AG04450 (cell line): ENCODE measurements at regions of chr4 and their contacts with region 1.

Region 1: DNA sequence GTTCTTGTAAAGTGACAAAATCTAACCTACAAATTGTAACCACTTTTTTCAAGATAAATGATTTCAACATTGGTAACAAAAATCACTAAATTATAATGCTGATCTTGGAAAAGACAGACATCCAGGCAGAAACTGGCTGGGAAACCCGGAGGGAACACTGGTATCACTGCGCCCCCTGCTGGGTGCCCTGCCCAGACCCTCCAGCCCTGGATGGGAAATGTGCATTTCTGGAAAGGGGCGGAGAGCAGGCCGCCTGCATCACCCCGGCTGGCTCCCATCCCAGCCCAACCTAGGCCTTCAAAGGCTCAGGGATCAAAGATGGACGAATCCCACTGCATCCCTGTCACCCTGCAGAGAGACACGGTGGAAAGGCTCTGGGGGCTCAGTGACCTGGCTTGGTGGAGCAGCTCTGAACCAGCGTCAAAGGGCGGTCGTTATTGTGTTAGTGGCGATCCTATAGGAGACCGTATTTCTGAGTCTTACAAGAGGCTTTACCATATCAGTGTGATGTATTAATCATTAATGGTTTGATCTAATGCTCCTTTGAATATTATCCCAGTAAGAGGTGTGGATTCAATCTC is 37.3 kb downstream of the ACOX3 start:
- DNase-seq: peak; percentile 66
- H3K4me3 ChIP-seq: no peak overlapping the region
- H3K27ac ChIP-seq: no peak overlapping the region
- H3K27me3 ChIP-seq: no peaks in the 10 kb centered on the region
- CTCF ChIP-seq: peak; percentile 93

Region 2: GRCh38 chr4:8247047-8247930 is 156.0 kb before region 1 on chr4:
- CTCF ChIA-PET with region 1: interaction called, 73 read pairs
- POLR2A ChIA-PET with region 1: interaction called, 5 read pairs
- DNase-seq: no peak
- H3K4me3 ChIP-seq: no peak overlapping the region
- H3K27ac ChIP-seq: no peak overlapping the region
- H3K27me3 ChIP-seq: peaks cover 7% of the 10 kb centered on the region
- CTCF ChIP-seq: no peak

Region 3: GRCh38 chr4:8267077-8267476 is 136.2 kb before region 1 on chr4:
- CTCF ChIA-PET with region 1: interaction called, 26 read pairs
- POLR2A ChIA-PET with region 1: interaction called, 5 read pairs
- DNase-seq: no peak
- H3K4me3 ChIP-seq: no peak overlapping the region
- H3K27ac ChIP-seq: no peak overlapping the region
- H3K27me3 ChIP-seq: peaks cover 2% of the 10 kb centered on the region
- CTCF ChIP-seq: peak; percentile 78

Region 4: DNA sequence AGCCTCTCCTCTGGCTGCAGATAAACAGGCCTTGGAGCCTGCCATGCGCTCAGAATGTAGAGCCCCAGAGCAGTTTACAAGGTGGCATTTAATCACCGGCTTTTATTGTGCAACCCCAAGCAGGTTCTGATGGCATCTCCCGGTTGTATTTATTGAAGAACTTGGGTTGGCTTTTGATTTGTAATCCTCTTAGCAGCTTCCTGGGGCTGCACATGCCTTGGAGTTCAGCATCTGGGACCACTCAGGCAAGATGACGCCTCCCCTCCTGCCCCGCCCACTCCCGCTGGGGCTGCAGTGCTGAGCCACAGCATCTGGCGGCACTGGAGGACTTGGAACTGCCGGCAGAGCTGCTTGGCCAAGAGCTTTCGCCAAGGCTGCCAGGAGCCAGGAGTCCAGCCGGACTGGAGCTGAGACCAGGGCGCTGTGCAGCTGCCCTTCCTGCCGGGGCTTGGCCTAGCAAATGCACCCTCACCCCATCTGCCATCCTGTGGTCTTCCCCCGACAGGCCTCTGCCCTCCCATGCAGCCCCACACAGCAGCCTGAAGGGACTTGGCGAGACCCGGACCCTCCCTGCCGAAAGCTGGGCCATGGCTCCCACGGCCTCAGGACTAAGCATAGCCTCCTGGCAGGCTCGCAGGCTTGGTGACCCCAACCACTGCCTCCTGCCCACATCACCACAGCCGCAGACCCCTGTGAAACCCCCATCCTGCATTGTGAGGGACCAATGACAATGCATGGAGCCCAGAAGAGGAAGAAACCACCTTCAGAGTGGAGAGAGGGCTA is 128.3 kb before region 1 on chr4:
- CTCF ChIA-PET with region 1: interaction called, 11 read pairs
- POLR2A ChIA-PET with region 1: interaction called, 5 read pairs
- DNase-seq: peak; percentile 95
- H3K4me3 ChIP-seq: no peak overlapping the region
- H3K27ac ChIP-seq: peak overlapping the region; percentile 57
- H3K27me3 ChIP-seq: peaks cover 2% of the 10 kb centered on the region
- CTCF ChIP-seq: peak; percentile 61

Region 5: GRCh38 chr4:8320386-8320750 is 82.9 kb before region 1 on chr4:
- CTCF ChIA-PET with region 1: no interaction called
- POLR2A ChIA-PET with region 1: no interaction called
- DNase-seq: no peak
- H3K4me3 ChIP-seq: no peak overlapping the region
- H3K27ac ChIP-seq: no peak overlapping the region
- H3K27me3 ChIP-seq: no peaks in the 10 kb centered on the region
- CTCF ChIP-seq: no peak

Region 6: GRCh38 chr4:8391972-8392371 is 11.3 kb before region 1 on chr4:
- CTCF ChIA-PET with region 1: interaction called, 13 read pairs
- POLR2A ChIA-PET with region 1: no interaction called
- DNase-seq: peak; percentile 72
- H3K4me3 ChIP-seq: no peak overlapping the region
- H3K27ac ChIP-seq: no peak overlapping the region
- H3K27me3 ChIP-seq: no peaks in the 10 kb centered on the region
- CTCF ChIP-seq: no peak

Region 7: GRCh38 chr4:8451440-8452197 is 48.4 kb after region 1 on chr4:
- CTCF ChIA-PET with region 1: no interaction called
- POLR2A ChIA-PET with region 1: no interaction called
- DNase-seq: no peak
- H3K4me3 ChIP-seq: no peak overlapping the region
- H3K27ac ChIP-seq: no peak overlapping the region
- H3K27me3 ChIP-seq: no peaks in the 10 kb centered on the region
- CTCF ChIP-seq: no peak